B cell (primary cell): ENCODE measurements at regions of chr20 and their contacts with region 1.

Region 1: DNA sequence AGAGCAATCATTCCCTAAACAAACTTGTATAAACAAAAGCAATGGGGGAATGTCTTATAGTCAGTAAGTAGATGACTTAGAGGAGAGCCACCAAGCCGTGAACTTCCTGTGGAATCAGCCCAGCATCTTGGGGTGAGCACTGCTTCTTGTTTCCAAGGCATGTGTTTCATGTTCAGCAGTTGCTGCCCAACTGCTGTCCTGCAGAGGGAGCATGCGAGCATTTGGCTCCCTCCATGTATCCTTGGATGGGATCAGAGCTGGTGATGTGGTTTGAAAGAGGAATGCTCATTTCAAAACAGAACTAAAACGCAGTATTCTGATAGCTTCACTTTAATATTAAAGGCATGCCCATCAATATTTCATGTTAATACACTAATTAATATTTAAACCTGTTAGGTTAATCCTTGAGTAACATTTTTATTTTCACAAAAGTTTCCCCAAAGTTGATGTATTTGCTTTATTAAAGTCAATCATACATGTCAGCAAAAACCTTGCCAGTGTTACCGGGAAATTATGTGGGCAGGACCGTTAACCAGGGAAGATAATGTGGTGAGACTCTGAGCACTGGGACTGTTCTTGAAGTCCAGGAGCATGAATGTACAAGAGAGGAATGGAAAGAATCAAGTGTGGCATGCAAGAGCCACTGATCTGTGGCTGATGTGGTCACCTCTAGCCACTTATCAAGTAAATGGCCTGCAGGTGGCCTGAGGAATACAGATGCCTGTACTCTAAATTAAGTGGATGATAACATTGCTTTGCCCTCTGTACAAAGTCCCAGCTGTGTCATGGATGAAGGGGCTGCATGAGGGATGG is 172.2 kb upstream of the GGTLC1 start:
- DNase-seq: peak; percentile 7
- ATAC-seq: no peak
- H3K4me3 ChIP-seq: no peak overlapping the region
- H3K4me3 Mint-ChIP-seq: no peak overlapping the region
- H3K27ac ChIP-seq: no peak overlapping the region
- H3K27ac Mint-ChIP-seq: no peak overlapping the region
- H3K4me1 ChIP-seq: no peaks in the 10 kb centered on the region
- H3K4me1 Mint-ChIP-seq: no peaks in the 10 kb centered on the region
- H3K27me3 ChIP-seq: no peaks in the 10 kb centered on the region
- H3K27me3 Mint-ChIP-seq: no peaks in the 10 kb centered on the region
- CTCF ChIP-seq: peak; percentile 35

Region 2: DNA sequence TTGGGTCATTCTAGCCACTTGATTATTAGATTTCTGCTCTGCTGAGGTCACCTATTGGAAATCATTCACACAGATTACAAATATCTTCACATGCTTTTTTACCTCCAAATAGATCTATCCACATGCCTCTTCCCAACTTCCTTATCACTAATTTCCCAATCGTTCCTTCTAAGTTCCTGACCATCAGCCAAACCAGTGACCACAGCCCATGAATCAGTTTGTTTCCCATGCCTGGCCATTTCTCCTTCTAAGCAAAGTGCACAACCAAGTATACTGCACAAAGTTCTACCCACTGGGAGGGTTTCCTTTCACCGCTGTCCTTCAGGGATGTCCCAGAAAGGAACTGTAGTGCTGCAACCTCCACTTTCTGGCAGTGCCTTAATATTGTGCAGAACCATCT is 168.1 kb after region 1 on chr20:
- CTCF ChIA-PET with region 1: no interaction called
- POLR2A ChIA-PET with region 1: no interaction called
- intact Hi-C with region 1: no loop called
- DNase-seq: no peak
- ATAC-seq: no peak
- H3K4me3 ChIP-seq: no peak overlapping the region
- H3K4me3 Mint-ChIP-seq: no peak overlapping the region
- H3K27ac ChIP-seq: no peak overlapping the region
- H3K27ac Mint-ChIP-seq: no peak overlapping the region
- H3K4me1 ChIP-seq: no peaks in the 10 kb centered on the region
- H3K4me1 Mint-ChIP-seq: no peaks in the 10 kb centered on the region
- H3K27me3 ChIP-seq: no peaks in the 10 kb centered on the region
- H3K27me3 Mint-ChIP-seq: peaks cover 3% of the 10 kb centered on the region
- CTCF ChIP-seq: no peak

Region 3: GRCh38 chr20:24917797-24918578 is 757.2 kb after region 1 on chr20:
- CTCF ChIA-PET with region 1: interaction called, 6 read pairs
- POLR2A ChIA-PET with region 1: no interaction called
- intact Hi-C with region 1: loop called (anchors 5 kb)
- DNase-seq: peak; percentile 32
- ATAC-seq: no peak
- H3K4me3 ChIP-seq: no peak overlapping the region
- H3K4me3 Mint-ChIP-seq: no peak overlapping the region
- H3K27ac ChIP-seq: no peak overlapping the region
- H3K27ac Mint-ChIP-seq: no peak overlapping the region
- H3K4me1 ChIP-seq: peaks cover 0 to 3% of the 10 kb centered on the region in 2 donors
- H3K4me1 Mint-ChIP-seq: no peaks in the 10 kb centered on the region
- H3K27me3 ChIP-seq: peaks cover 0 to 13% (median 2%) of the 10 kb centered on the region in 4 experiments
- H3K27me3 Mint-ChIP-seq: peaks cover 23% of the 10 kb centered on the region
- CTCF ChIP-seq: peak; percentile 67